Natural killer cell (primary cell): ENCODE measurements at regions of chr2 and their contacts with region 1.

Region 1: GRCh38 chr2:191114403-191114886 is 36.3 kb downstream of the STAT4 start:
- DNase-seq: peak; percentile 62 to 74
- ATAC-seq: peak; percentile 57 to 72 (median 62)
- H3K4me3 ChIP-seq: peak overlapping the region; percentile 17
- H3K4me3 Mint-ChIP-seq: peak overlapping the region; percentile 78
- H3K27ac ChIP-seq: peak overlapping the region; percentile 100
- H3K27ac Mint-ChIP-seq: peak overlapping the region; percentile 95 to 98
- H3K4me1 ChIP-seq: peaks cover 33% of the 10 kb centered on the region
- H3K4me1 Mint-ChIP-seq: peaks cover 76% of the 10 kb centered on the region in 2 donors
- H3K27me3 ChIP-seq: no peaks in the 10 kb centered on the region
- H3K27me3 Mint-ChIP-seq: no peaks in the 10 kb centered on the region
- CTCF ChIP-seq: no peak

Region 2: GRCh38 chr2:191128172-191128910 is 13.9 kb after region 1 on chr2:
- intact Hi-C with region 1: loop called (anchors 1 kb)
- DNase-seq: peak in 1 of 2 donors; percentile 65
- ATAC-seq: peak; percentile 68 to 86 (median 75)
- H3K4me3 ChIP-seq: peak overlapping the region; percentile 0
- H3K4me3 Mint-ChIP-seq: peak overlapping the region; percentile 71
- H3K27ac ChIP-seq: peak overlapping the region; percentile 86
- H3K27ac Mint-ChIP-seq: peak overlapping the region; percentile 86 to 98
- H3K4me1 ChIP-seq: peaks cover 34% of the 10 kb centered on the region
- H3K4me1 Mint-ChIP-seq: peaks cover 72 to 79% of the 10 kb centered on the region in 2 donors
- H3K27me3 ChIP-seq: no peaks in the 10 kb centered on the region
- H3K27me3 Mint-ChIP-seq: no peaks in the 10 kb centered on the region
- CTCF ChIP-seq: no peak